ENCODE measurements at regions of chr18 and their contacts with region 1.

Region 1: DNA sequence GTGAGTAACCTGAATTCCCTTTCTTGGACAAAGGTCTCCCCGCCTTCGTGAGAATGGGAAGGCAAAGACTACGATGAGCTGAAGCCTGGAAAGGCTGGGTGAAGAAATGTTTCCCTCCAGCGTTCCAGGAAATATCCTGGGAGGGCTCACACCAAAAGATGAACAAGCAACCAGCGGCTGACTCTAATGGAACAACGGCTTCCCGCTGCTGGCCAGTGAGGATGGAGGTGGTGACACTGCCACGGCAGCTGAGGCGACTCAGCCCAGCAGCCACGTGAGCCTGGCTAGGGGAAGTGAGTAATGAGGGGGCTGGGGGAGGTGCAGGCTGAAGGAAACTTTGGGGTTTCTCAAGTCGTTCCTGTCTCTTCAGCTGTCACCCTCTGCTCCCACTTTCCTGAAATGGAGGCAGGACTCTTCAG is 105.0 kb upstream of the SMAD7 start:
- DNase-seq: no peak
- H3K4me3 ChIP-seq: peak overlapping the region in 1 of 4 donors; percentile 6
- H3K27ac ChIP-seq: peak overlapping the region in 1 of 4 donors; percentile 61
- H3K4me1 ChIP-seq: peaks cover 17 to 19% (median 19%) of the 10 kb centered on the region in 4 donors
- H3K27me3 ChIP-seq: no peaks in the 10 kb centered on the region
- CTCF ChIP-seq: no peak
- EP300 ChIP-seq: no peak
- POLR2A ChIP-seq: no peak

Region 2: GRCh38 chr18:49178736-49179135 is 123.0 kb after region 1 on chr18:
- intact Hi-C with region 1: loop called (anchors 10 kb)
- DNase-seq: no peak
- H3K4me3 ChIP-seq: no peak overlapping the region
- H3K27ac ChIP-seq: no peak overlapping the region
- H3K4me1 ChIP-seq: peaks cover 0 to 8% (median 5%) of the 10 kb centered on the region in 4 donors
- H3K27me3 ChIP-seq: no peaks in the 10 kb centered on the region
- CTCF ChIP-seq: peak; percentile 48 to 63 (median 60)
- EP300 ChIP-seq: no peak
- POLR2A ChIP-seq: no peak